Mammary epithelial cell (primary cell): ENCODE measurements at regions of chr15 and their contacts with region 1.

Region 1: GRCh38 chr15:32803631-32804030 is 85.8 kb downstream of the GREM1 start:
- DNase-seq: peak; percentile 21
- H3K4me3 ChIP-seq: no peak overlapping the region
- H3K27ac ChIP-seq: no peak overlapping the region
- H3K4me1 ChIP-seq: no peaks in the 10 kb centered on the region
- H3K27me3 ChIP-seq: no peaks in the 10 kb centered on the region
- CTCF ChIP-seq: no peak

Region 2: GRCh38 chr15:32763295-32763694 is 40.3 kb before region 1 on chr15:
- CTCF ChIA-PET with region 1: interaction called, 20 read pairs
- dilution Hi-C with region 1: no loop called
- in situ Hi-C with region 1: no loop called
- intact Hi-C with region 1: no loop called
- DNase-seq: no peak
- H3K4me3 ChIP-seq: no peak overlapping the region
- H3K27ac ChIP-seq: no peak overlapping the region
- H3K4me1 ChIP-seq: no peaks in the 10 kb centered on the region
- H3K27me3 ChIP-seq: no peaks in the 10 kb centered on the region
- CTCF ChIP-seq: no peak